Body of pancreas (tissue), 4 donors: ENCODE measurements at regions of chr1 and their contacts with region 1.

Region 1: DNA sequence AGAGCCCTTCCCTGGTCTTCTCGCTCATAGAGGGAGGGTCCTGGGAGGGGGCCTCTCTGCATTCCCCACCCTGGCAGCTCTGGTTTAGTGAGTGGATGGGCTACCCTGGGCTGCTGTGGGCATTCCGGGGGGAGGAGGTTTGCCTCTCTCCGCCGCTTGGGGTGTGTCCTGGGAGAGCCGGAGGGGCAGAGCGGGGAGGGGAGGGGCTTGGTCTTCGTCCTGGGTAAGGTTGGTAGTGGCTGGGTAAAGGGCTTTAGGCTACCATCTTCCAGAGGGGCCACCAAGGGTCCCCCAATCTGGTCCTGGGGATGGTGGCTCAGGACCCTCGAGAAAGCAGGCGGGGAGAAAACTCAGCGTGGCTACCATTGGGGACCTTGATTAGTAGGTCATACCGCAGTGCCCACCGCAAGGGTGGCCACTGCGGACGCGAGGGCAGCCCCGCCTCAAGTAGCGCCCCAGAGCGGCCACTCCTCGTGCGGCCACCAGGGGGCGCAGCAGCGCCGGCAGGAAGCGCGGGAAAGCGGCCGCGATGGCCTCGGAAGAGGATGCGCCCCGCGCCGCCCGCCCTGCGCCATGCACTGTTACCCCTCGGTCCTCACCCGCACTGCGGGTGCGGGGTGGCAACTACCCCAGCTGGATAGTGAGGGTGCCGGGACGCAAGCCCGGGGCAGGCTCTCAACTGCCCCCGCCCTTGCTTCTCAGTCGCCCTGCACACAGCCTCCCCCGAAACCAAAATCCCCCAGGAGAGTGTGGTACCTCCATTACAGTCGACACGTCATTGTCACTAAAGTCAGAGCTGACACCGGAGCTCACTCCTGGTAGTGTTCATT is 44.1 kb upstream of the SLC25A33 start:
- DNase-seq: peak; percentile 37 to 69 (median 62)
- ATAC-seq: peak; percentile 59
- H3K4me3 ChIP-seq: no peak overlapping the region
- H3K27ac ChIP-seq: no peak overlapping the region
- H3K4me1 ChIP-seq: peaks cover 16% of the 10 kb centered on the region
- H3K27me3 ChIP-seq: no peaks in the 10 kb centered on the region
- CTCF ChIP-seq: peak; percentile 77 to 99 (median 91)
- POLR2A ChIP-seq: no peak

Region 2: DNA sequence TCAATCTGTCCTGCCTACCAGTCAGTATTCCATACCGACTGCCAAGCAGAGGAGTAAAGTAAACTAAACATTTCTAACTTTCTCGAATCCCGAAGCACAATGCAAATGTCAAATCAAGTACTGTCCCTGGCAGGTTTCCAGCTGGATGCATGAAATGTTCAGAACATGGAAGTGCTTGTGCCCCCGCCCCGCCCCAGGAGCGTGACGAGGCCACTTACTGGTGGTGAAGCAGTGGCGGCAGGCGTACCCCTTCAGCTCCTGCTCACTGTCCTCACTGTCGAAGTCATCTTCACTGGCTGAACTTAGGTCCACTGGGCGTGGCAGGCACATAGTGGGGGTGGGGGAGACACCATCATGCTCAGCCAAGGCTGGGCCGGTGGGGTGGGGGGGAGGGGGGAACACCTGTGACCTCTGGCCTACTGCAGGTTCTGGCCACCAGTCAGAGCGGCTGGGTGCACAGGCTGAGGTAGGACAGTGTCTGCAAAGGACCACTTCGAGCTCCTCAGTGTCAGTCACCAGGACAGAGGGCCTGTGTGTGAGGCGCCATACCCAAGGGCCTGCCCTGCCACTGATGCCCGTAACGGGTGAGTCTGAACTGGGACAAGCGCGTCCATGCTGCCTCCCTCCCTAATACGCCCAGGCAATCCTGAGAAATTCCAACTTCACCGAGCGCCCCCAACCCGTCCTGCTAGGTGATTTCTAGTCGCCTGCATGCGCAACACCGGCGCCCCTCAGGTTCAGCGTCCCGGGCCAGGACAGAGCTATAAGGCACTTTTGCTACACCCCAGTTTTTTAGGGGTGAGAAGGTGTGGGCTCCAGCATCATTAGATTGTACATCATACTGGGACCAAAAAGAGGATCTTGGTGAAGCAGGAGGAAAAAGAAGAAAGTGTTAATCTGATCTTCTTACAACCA is 1130.4 kb before region 1 on chr1:
- intact Hi-C with region 1: no loop called
- DNase-seq: no peak
- ATAC-seq: no peak
- H3K4me3 ChIP-seq: no peak overlapping the region
- H3K27ac ChIP-seq: no peak overlapping the region
- H3K4me1 ChIP-seq: peaks cover 35% of the 10 kb centered on the region
- H3K27me3 ChIP-seq: no peaks in the 10 kb centered on the region
- CTCF ChIP-seq: no peak
- POLR2A ChIP-seq: no peak

Region 3: GRCh38 chr1:9573723-9574122 is 78.6 kb after region 1 on chr1:
- intact Hi-C with region 1: loop called (anchors 5 kb)
- DNase-seq: no peak
- ATAC-seq: no peak
- H3K4me3 ChIP-seq: no peak overlapping the region
- H3K27ac ChIP-seq: no peak overlapping the region
- H3K4me1 ChIP-seq: no peaks in the 10 kb centered on the region
- H3K27me3 ChIP-seq: no peaks in the 10 kb centered on the region
- CTCF ChIP-seq: peak in 5 of 7 experiments; percentile 24 to 69 (median 46)
- POLR2A ChIP-seq: no peak